Dendritic cell treated with granulocyte-macrophage colony-stimulating factor and Interleukin-4, amounts not matched to agents 40 ng/mL and 50 ng/mL, for 4 days (primary cell): ENCODE measurements at regions of chr1 and their contacts with region 1.

Region 1: GRCh38 chr1:97693601-97694000 is 227.2 kb downstream of the DPYD start:
- H3K4me3 Mint-ChIP-seq: no peak overlapping the region
- H3K27ac Mint-ChIP-seq: peak overlapping the region; percentile 25
- H3K4me1 Mint-ChIP-seq: no peaks in the 10 kb centered on the region
- H3K27me3 Mint-ChIP-seq: no peaks in the 10 kb centered on the region

Region 2: DNA sequence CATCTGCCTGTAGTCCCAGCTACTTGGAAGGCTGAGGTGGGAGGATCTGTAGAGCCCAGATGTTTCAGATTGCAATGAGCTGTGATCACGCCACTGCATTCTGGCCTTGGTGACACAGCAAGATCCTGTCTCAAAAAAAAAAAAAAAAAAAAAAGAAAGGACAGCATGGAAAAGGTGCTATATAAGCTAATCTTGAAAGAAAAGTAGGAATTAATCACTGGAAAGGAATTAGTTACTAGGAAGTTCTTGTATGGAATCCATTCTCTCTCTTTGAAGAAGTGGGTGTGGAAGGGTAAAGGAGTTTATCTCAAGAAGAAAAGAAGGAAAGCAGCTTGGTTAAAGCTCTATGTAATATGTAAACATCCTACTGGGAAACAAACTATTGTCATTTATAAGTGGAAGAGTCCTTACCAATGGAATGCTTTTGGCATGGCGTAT is 112.0 kb before region 1 on chr1:
- intact Hi-C with region 1: loop called (anchors 10 kb)
- H3K4me3 Mint-ChIP-seq: no peak overlapping the region
- H3K27ac Mint-ChIP-seq: no peak overlapping the region
- H3K4me1 Mint-ChIP-seq: no peaks in the 10 kb centered on the region
- H3K27me3 Mint-ChIP-seq: no peaks in the 10 kb centered on the region